Heart left ventricle (tissue), 16 donors: ENCODE measurements at regions of chr10 and their contacts with region 1.

Region 1: GRCh38 chr10:63819753-63820329 is 298.6 kb downstream of the REEP3 start:
- DNase-seq: peak; percentile 67 to 78 (median 70)
- ATAC-seq: peak; percentile 42 to 57 (median 55)
- H3K4me3 ChIP-seq: no peak overlapping the region
- H3K27ac ChIP-seq: no peak overlapping the region
- H3K4me1 ChIP-seq: peaks cover 0 to 9% (median 0%) of the 10 kb centered on the region in 12 donors
- H3K27me3 ChIP-seq: peaks cover 0 to 2% (median 0%) of the 10 kb centered on the region in 9 donors
- CTCF ChIP-seq: peak; percentile 61 to 86 (median 77)
- POLR2A ChIP-seq: no peak

Region 2: GRCh38 chr10:62594093-62594520 is 1225.7 kb before region 1 on chr10:
- intact Hi-C with region 1: loop called in 1 of 10 experiments (anchors 10 kb)
- DNase-seq: peak; percentile 51 to 79 (median 58)
- ATAC-seq: peak in 3 of 4 donors; percentile 83 to 94 (median 86)
- H3K4me3 ChIP-seq: no peak overlapping the region
- H3K27ac ChIP-seq: no peak overlapping the region
- H3K4me1 ChIP-seq: peaks cover 0 to 5% (median 0%) of the 10 kb centered on the region in 12 donors
- H3K27me3 ChIP-seq: no peaks in the 10 kb centered on the region
- CTCF ChIP-seq: peak; percentile 71 to 91 (median 86)
- POLR2A ChIP-seq: no peak

Region 3: GRCh38 chr10:63166742-63167258 is 653.0 kb before region 1 on chr10:
- intact Hi-C with region 1: loop called in 4 of 10 experiments (anchors 5 to 10 kb)
- DNase-seq: peak in 1 of 5 donors; percentile 32
- ATAC-seq: peak; percentile 47 to 72 (median 68)
- H3K4me3 ChIP-seq: no peak overlapping the region
- H3K27ac ChIP-seq: peak overlapping the region in 1 of 12 donors; percentile 0
- H3K4me1 ChIP-seq: peaks cover 0 to 37% (median 17%) of the 10 kb centered on the region in 12 donors
- H3K27me3 ChIP-seq: no peaks in the 10 kb centered on the region
- CTCF ChIP-seq: peak; percentile 64 to 92 (median 82)
- POLR2A ChIP-seq: no peak